MCF 10A (cell line): ENCODE measurements at regions of chr1 and their contacts with region 1.

Region 1: GRCh38 chr1:208207388-208208131 is 36.6 kb downstream of the PLXNA2 start:
- DNase-seq: peak; percentile 100
- H3K4me3 Mint-ChIP-seq: peak overlapping the region; percentile 43
- H3K27ac Mint-ChIP-seq: peak overlapping the region; percentile 89
- H3K4me1 Mint-ChIP-seq: peaks cover 30% of the 10 kb centered on the region
- H3K27me3 Mint-ChIP-seq: no peaks in the 10 kb centered on the region
- CTCF ChIP-seq: no peak

Region 2: DNA sequence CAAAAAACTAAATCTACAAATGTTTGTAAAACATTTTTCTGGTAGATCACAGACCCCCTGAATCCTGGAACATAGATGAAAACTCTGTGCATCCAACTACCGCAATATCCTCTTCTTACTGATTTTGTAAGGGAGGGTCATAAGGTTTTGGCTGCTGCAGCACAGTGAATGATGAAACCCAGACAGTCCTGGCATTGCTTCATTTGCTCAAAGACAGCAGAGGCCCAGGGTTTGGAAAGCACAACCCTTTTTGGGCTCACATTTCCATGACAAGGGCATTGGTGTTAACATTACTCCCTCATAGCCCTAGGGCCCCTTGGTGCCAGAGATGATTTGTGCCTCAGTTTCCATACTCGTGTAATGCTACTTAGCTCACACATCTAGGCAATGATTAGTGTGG is 14.6 kb before region 1 on chr1:
- CTCF ChIA-PET with region 1: interaction called, 59 read pairs
- POLR2A ChIA-PET with region 1: interaction called, 22 read pairs
- intact Hi-C with region 1: no loop called
- DNase-seq: peak; percentile 75
- H3K4me3 Mint-ChIP-seq: no peak overlapping the region
- H3K27ac Mint-ChIP-seq: no peak overlapping the region
- H3K4me1 Mint-ChIP-seq: peaks cover 30% of the 10 kb centered on the region
- H3K27me3 Mint-ChIP-seq: no peaks in the 10 kb centered on the region
- CTCF ChIP-seq: no peak

Region 3: GRCh38 chr1:208381481-208381880 is 173.9 kb after region 1 on chr1:
- CTCF ChIA-PET with region 1: no interaction called
- POLR2A ChIA-PET with region 1: no interaction called
- intact Hi-C with region 1: no loop called
- DNase-seq: no peak
- H3K4me3 Mint-ChIP-seq: no peak overlapping the region
- H3K27ac Mint-ChIP-seq: no peak overlapping the region
- H3K4me1 Mint-ChIP-seq: no peaks in the 10 kb centered on the region
- H3K27me3 Mint-ChIP-seq: no peaks in the 10 kb centered on the region
- CTCF ChIP-seq: no peak